ENCODE measurements at regions of chr1 and their contacts with region 1.

Region 1: GRCh38 chr1:115545791-115546733 is 95.7 kb upstream of the VANGL1 start:
- DNase-seq: peak; percentile 54 to 75
- ATAC-seq: peak; percentile 53
- H3K4me3 ChIP-seq: no peak overlapping the region
- H3K27ac ChIP-seq: peak overlapping the region in 1 of 2 donors; percentile 43
- H3K4me1 ChIP-seq: no peaks in the 10 kb centered on the region
- H3K27me3 ChIP-seq: no peaks in the 10 kb centered on the region

Region 2: DNA sequence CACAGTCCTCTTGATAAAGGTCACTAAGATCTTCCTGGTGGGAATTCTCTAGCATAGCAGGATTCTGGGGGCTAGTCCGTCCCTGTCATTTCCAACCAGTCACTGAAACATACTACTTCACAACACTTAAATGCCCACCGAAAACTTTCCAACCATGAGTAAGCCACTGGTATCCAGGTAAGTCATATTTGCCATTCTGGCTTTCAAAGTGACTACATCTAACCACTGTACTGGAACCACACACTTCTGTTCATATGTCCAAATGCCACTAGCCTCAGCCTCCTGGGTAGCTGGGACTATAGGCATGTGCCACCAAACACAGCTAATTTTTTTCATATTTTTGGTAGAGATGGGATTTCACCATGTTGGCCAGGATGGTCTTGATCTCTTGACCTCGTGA is 31.5 kb after region 1 on chr1:
- intact Hi-C with region 1: no loop called
- DNase-seq: no peak
- ATAC-seq: no peak
- H3K4me3 ChIP-seq: no peak overlapping the region
- H3K27ac ChIP-seq: no peak overlapping the region
- H3K4me1 ChIP-seq: no peaks in the 10 kb centered on the region
- H3K27me3 ChIP-seq: no peaks in the 10 kb centered on the region

Region 3: GRCh38 chr1:115595279-115596079 is 49.4 kb after region 1 on chr1:
- intact Hi-C with region 1: loop called in 1 of 2 experiments (anchors 5 kb)
- DNase-seq: peak; percentile 91 to 95
- ATAC-seq: peak; percentile 92
- H3K4me3 ChIP-seq: no peak overlapping the region
- H3K27ac ChIP-seq: no peak overlapping the region
- H3K4me1 ChIP-seq: no peaks in the 10 kb centered on the region
- H3K27me3 ChIP-seq: no peaks in the 10 kb centered on the region

Region 4: GRCh38 chr1:115862403-115862802 is 316.3 kb after region 1 on chr1:
- intact Hi-C with region 1: no loop called
- DNase-seq: no peak
- ATAC-seq: no peak
- H3K4me3 ChIP-seq: no peak overlapping the region
- H3K27ac ChIP-seq: no peak overlapping the region
- H3K4me1 ChIP-seq: no peaks in the 10 kb centered on the region
- H3K27me3 ChIP-seq: no peaks in the 10 kb centered on the region

Measured in aorta (tissue), 5 donors.